ENCODE measurements at regions of chr10 and their contacts with region 1.

Region 1: GRCh38 chr10:35306852-35307256 is 29.5 kb upstream of the CCNY start:
- DNase-seq: no peak
- H3K4me3 ChIP-seq: no peak overlapping the region
- H3K27ac ChIP-seq: no peak overlapping the region
- H3K4me1 ChIP-seq: no peaks in the 10 kb centered on the region
- H3K27me3 ChIP-seq: 0 out of 7 replicates have a peak, but pooled peaks cover 0 to 3% (median 0%) of the 10 kb centered on the region in 4 experiments
- CTCF ChIP-seq: no peak
- EP300 ChIP-seq: no peak
- POLR2A ChIP-seq: no peak
- RAD21 ChIP-seq: no peak

Region 2: DNA sequence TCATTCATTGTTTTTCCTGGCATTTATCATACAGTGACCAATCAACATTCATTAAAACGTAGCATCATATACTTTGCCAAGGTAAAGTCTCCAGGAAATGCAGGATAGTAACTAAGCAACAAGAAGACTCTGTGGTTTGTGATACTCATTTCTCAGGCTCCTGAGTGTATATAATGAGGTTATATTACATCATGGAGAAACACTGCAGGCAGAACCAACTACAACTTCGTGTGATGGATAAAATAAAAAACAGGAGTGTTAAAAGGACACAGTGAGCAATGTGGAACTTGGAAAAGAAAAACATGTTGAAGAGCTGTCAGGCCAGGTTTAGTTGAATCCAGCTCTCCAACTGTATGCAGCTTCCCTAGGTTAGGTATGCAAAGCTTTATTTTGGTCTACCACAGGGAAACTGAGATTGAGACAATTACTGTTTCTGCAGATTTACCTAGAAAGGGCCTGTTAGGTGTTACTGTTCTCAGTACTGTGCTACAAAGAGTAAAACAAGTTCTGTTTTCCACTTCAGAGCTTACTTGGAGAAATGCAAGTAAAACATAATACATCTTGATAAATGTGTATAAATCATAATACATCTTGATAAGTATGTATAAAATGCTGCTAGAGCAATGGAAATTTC is 21.7 kb after region 1 on chr10:
- CTCF ChIA-PET with region 1: interaction called, 12 read pairs
- POLR2A ChIA-PET with region 1: no interaction called
- DNase-seq: no peak
- H3K4me3 ChIP-seq: no peak overlapping the region
- H3K27ac ChIP-seq: no peak overlapping the region
- H3K4me1 ChIP-seq: peaks cover 0 to 4% (median 3%) of the 10 kb centered on the region in 4 experiments; a peak in 4 of 7 replicates
- H3K27me3 ChIP-seq: no peaks in the 10 kb centered on the region
- CTCF ChIP-seq: no peak
- EP300 ChIP-seq: no peak
- POLR2A ChIP-seq: no peak
- RAD21 ChIP-seq: no peak

Region 3: DNA sequence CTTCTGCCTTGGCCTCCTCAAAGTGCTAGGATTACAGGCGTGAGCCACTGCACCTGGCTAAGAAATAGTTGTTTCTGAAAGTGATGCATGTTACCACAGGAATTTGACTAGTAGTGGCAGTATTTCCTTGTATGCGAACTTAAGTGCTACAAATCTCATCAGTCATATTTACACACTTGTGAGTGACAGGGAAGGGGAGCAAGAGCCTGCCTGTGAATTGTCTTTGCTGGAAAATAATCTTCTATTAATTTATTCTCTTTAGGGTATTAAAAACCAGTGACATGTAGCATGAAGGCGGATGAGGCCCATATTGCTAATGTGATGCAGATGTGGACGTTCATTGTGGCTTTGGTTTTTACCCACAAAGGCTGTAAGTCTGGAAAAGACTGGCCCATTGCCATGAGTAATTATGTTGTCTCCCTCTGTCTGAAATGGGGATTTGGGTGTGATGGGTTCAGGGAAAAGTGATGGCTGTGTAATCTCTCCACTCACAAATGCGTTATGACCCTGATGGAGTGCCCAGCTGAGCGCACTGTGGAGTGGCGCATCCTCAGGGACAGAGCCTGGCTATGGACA is 127.1 kb after region 1 on chr10:
- CTCF ChIA-PET with region 1: no interaction called
- POLR2A ChIA-PET with region 1: no interaction called
- DNase-seq: no peak
- H3K4me3 ChIP-seq: no peak overlapping the region
- H3K27ac ChIP-seq: no peak overlapping the region
- H3K4me1 ChIP-seq: peaks cover 0 to 3% (median 0%) of the 10 kb centered on the region in 4 experiments; a peak in 2 of 7 replicates
- H3K27me3 ChIP-seq: no peaks in the 10 kb centered on the region
- CTCF ChIP-seq: no peak
- EP300 ChIP-seq: no peak
- POLR2A ChIP-seq: no peak
- RAD21 ChIP-seq: no peak